Activated CD8-positive, alpha-beta memory T cell treated with anti-CD3 and anti-CD28 coated beads, Interleukin-2, amount 10 ng/mL, durations not matched to agents 7 days and 5 days (primary cell): ENCODE measurements at regions of chr5 and their contacts with region 1.

Region 1: GRCh38 chr5:112848116-112848811 is 12.8 kb upstream of the SRP19 start:
- DNase-seq: no peak
- ATAC-seq: peak; percentile 98
- H3K4me3 Mint-ChIP-seq: no peak overlapping the region
- H3K27ac Mint-ChIP-seq: no peak overlapping the region
- H3K4me1 Mint-ChIP-seq: peaks cover 3% of the 10 kb centered on the region
- H3K27me3 Mint-ChIP-seq: peaks cover 10% of the 10 kb centered on the region

Region 2: DNA sequence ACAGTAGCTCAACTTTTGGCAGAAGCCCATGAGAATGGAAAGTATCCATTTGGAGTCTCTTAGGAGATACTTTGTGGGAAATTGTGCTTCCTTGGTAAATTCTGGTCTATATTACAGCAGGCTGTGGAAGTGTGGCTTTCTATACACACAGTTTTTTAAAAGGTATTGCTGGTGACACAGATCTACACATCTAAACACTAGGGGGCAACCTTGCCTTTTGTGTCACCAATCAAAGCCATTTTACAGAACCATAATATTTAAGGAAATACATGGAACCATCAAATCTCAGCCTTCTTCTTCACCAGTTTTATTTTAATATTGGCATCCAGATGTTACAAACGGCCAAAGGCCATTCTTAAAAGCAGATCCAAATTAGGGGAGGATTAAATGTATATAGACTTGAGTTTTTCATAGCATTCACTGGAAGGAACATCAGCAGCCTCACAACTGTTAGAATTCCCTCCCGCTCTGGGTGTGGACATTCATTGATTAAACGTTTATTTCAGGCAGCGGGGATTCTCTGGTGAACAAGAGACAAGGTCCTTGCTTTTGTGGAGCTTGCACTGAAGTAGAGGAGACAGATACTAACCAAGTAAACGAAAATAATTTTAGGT is 296.7 kb before region 1 on chr5:
- CTCF ChIA-PET with region 1: interaction called, 12 read pairs
- DNase-seq: peak; percentile 49
- ATAC-seq: peak; percentile 45
- H3K4me3 Mint-ChIP-seq: no peak overlapping the region
- H3K27ac Mint-ChIP-seq: no peak overlapping the region
- H3K4me1 Mint-ChIP-seq: peaks cover 3% of the 10 kb centered on the region
- H3K27me3 Mint-ChIP-seq: peaks cover 13% of the 10 kb centered on the region

Region 3: DNA sequence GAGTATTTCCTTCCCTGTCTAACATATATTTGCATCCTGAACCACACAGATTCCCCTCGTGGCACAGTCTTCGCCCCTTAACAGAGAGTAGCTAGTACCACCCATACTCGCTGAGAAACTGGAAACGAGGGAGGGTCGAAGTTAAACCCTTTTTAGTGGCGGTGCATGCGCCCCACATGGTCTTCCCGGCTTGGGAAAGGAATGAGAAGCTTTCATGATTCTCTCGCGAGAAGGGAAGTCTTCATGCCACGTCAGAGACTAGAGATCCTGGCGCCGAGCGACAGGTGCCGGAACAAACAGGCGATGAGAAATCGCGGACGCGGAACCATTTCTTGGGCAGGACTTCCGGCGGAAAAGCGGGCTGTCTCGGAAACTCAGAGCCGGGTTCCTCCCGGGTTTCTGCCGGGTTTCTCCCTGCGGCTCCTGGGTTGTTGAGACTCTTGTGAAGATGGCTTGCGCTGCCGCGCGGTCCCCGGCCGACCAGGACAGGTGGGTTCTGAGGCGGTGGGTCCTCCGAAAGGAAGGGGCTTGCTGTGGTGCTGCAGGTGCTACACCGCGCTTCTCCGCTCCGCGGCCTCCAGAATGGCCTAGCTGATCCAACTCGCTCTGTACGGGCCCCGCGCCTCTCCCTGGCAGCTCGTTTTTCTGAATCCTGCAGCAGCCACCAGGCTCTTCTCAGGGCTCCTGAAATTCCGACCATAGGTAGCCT is 12.8 kb after region 1 on chr5 and contains the start of gene SRP19:
- CTCF ChIA-PET with region 1: interaction called, 20 read pairs
- DNase-seq: peak; percentile 96
- ATAC-seq: peak; percentile 97
- H3K4me3 Mint-ChIP-seq: peak within 1 kb of the TSS; percentile 97
- H3K27ac Mint-ChIP-seq: peak within 1 kb of the TSS; percentile 89
- H3K4me1 Mint-ChIP-seq: peaks cover 41% of the 10 kb centered on the region
- H3K27me3 Mint-ChIP-seq: peaks cover 13% of the 10 kb centered on the region
- total RNA-seq, gene SRP19: 50.1 to 55.9 TPM

Region 4: GRCh38 chr5:112885001-112885400 is 36.7 kb after region 1 on chr5:
- CTCF ChIA-PET with region 1: interaction called, 10 read pairs
- DNase-seq: no peak
- ATAC-seq: no peak
- H3K4me3 Mint-ChIP-seq: no peak overlapping the region
- H3K27ac Mint-ChIP-seq: peak overlapping the region; percentile 51
- H3K4me1 Mint-ChIP-seq: peaks cover 48% of the 10 kb centered on the region
- H3K27me3 Mint-ChIP-seq: no peaks in the 10 kb centered on the region

Region 5: GRCh38 chr5:112958093-112959088 is 110.1 kb after region 1 on chr5:
- CTCF ChIA-PET with region 1: no interaction called
- DNase-seq: no peak
- ATAC-seq: peak; percentile 65
- H3K4me3 Mint-ChIP-seq: no peak overlapping the region
- H3K27ac Mint-ChIP-seq: peak overlapping the region; percentile 2
- H3K4me1 Mint-ChIP-seq: peaks cover 48% of the 10 kb centered on the region
- H3K27me3 Mint-ChIP-seq: peaks cover 6% of the 10 kb centered on the region